IMR-90 (cell line): ENCODE measurements at regions of chr7 and their contacts with region 1.

Region 1: GRCh38 chr7:128728598-128728997 is 10.6 kb upstream of the CALU start:
- DNase-seq: peak; percentile 72
- ATAC-seq: peak; percentile 85
- H3K4me3 ChIP-seq: peak overlapping the region; percentile 15; the same call in 1 of the 2 replicates
- H3K27ac ChIP-seq: no peak overlapping the region
- H3K4me1 ChIP-seq: no peaks in the 10 kb centered on the region; the same call in 1 of the 2 replicates
- H3K27me3 ChIP-seq: peaks cover 27% of the 10 kb centered on the region
- CTCF ChIP-seq: no peak
- POLR2A ChIP-seq: no peak
- RAD21 ChIP-seq: no peak

Region 2: GRCh38 chr7:128155100-128155740 is 573.4 kb before region 1 on chr7:
- CTCF ChIA-PET with region 1: no interaction called
- POLR2A ChIA-PET with region 1: no interaction called
- dilution Hi-C with region 1: no loop called
- in situ Hi-C with region 1: no loop called
- intact Hi-C with region 1: no loop called
- DNase-seq: no peak
- ATAC-seq: no peak
- H3K4me3 ChIP-seq: no peak overlapping the region
- H3K27ac ChIP-seq: no peak overlapping the region
- H3K4me1 ChIP-seq: no peaks in the 10 kb centered on the region
- H3K27me3 ChIP-seq: peaks cover 59% of the 10 kb centered on the region
- CTCF ChIP-seq: no peak
- POLR2A ChIP-seq: no peak
- RAD21 ChIP-seq: no peak

Region 3: DNA sequence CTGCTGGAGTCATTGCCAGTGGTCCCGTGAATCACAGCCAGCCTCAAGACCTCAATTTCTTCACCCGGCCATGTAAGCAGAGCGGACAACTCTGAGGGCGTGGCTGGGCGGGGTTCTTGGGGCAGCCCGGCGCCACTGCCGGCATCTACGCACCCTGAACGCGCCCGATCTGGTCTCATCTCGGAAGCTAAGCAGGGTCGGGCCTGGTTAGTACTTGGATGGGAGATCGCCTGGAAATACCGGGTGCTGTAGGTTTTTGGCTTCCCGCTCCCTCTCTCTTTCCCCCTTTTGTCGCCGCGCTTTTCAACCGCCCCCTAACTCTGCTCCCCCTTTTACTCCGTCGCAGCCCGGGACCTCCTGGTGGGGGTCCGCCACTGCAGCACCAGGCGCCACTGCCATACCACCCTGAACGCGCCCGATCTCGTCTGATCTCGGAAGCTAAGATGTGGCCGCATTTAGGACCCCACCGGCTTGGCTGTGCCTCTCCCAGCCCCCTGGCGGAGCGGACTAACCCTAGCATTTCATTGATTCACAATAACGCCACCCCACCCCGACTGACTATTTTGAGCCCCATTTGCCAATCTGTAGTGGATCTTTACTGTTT is 31.2 kb before region 1 on chr7:
- CTCF ChIA-PET with region 1: no interaction called
- POLR2A ChIA-PET with region 1: interaction called, 10 read pairs
- dilution Hi-C with region 1: no loop called
- in situ Hi-C with region 1: no loop called
- intact Hi-C with region 1: no loop called
- DNase-seq: peak; percentile 44
- ATAC-seq: peak; percentile 89
- H3K4me3 ChIP-seq: peak overlapping the region; percentile 60
- H3K27ac ChIP-seq: no peak overlapping the region
- H3K4me1 ChIP-seq: no peaks in the 10 kb centered on the region
- H3K27me3 ChIP-seq: peaks cover 15% of the 10 kb centered on the region
- CTCF ChIP-seq: peak; percentile 28; the same call in 1 of the 2 replicates
- POLR2A ChIP-seq: no peak
- RAD21 ChIP-seq: peak; percentile 18; the same call in 1 of the 2 replicates